ENCODE measurements at regions of chr10 and their contacts with region 1.

Region 1: DNA sequence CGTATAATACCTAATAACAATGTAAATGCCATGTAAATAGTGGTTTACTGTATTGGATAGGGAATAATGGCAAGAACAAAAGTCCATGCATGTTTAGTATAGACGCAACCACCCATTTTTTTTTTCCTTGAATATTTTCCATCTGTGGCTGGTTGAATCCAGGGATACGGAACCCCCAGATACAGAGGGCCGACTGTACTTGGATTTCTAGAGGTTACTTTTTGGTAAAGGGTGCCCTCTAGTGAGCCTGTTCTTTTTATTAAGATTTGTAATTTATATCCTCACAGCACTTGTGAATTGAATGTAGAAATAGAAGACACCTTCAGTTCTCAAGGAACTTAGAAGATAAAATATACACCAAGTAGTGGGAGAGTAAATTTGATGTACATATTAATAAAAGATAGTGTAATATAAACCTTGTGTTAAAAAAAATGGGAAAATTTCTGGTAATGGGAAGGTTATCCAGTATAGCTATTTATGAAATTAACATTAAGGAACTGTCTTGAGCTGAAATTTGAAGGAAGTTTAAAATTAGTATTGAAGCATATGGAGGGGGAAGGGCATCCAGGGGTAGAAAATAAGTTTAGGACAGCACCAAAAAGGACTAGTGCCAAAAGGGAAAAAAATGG is 32.0 kb downstream of the EXOC6 start:
- DNase-seq: peak in 1 of 2 experiments; percentile 59
- H3K4me3 ChIP-seq: no peak overlapping the region
- H3K4me3 Mint-ChIP-seq: no peak overlapping the region
- H3K27ac Mint-ChIP-seq: no peak overlapping the region
- H3K4me1 ChIP-seq: peaks cover 6% of the 10 kb centered on the region; the same call in 1 of the 2 replicates
- H3K4me1 Mint-ChIP-seq: no peaks in the 10 kb centered on the region
- H3K27me3 ChIP-seq: no peaks in the 10 kb centered on the region
- H3K27me3 Mint-ChIP-seq: no peaks in the 10 kb centered on the region
- CTCF ChIP-seq: peak; percentile 54 to 58

Region 2: GRCh38 chr10:92517034-92517655 is 363.2 kb before region 1 on chr10:
- CTCF ChIA-PET with region 1: no interaction called
- POLR2A ChIA-PET with region 1: no interaction called
- intact Hi-C with region 1: loop called (anchors 1 kb)
- DNase-seq: peak; percentile 61 to 67
- H3K4me3 ChIP-seq: no peak overlapping the region
- H3K4me3 Mint-ChIP-seq: no peak overlapping the region
- H3K27ac Mint-ChIP-seq: no peak overlapping the region
- H3K4me1 ChIP-seq: no peaks in the 10 kb centered on the region
- H3K4me1 Mint-ChIP-seq: no peaks in the 10 kb centered on the region
- H3K27me3 ChIP-seq: no peaks in the 10 kb centered on the region
- H3K27me3 Mint-ChIP-seq: no peaks in the 10 kb centered on the region
- CTCF ChIP-seq: peak; percentile 77 to 80

Region 3: GRCh38 chr10:92644921-92645320 is 235.4 kb before region 1 on chr10:
- CTCF ChIA-PET with region 1: no interaction called
- POLR2A ChIA-PET with region 1: no interaction called
- intact Hi-C with region 1: loop called (anchors 2 kb)
- DNase-seq: no peak
- H3K4me3 ChIP-seq: no peak overlapping the region
- H3K4me3 Mint-ChIP-seq: no peak overlapping the region
- H3K27ac Mint-ChIP-seq: no peak overlapping the region
- H3K4me1 ChIP-seq: peaks cover 9% of the 10 kb centered on the region
- H3K4me1 Mint-ChIP-seq: peaks cover 8% of the 10 kb centered on the region
- H3K27me3 ChIP-seq: no peaks in the 10 kb centered on the region
- H3K27me3 Mint-ChIP-seq: no peaks in the 10 kb centered on the region
- CTCF ChIP-seq: no peak

Region 4: GRCh38 chr10:92822060-92822634 is 58.2 kb before region 1 on chr10:
- CTCF ChIA-PET with region 1: no interaction called
- POLR2A ChIA-PET with region 1: no interaction called
- intact Hi-C with region 1: loop called (anchors 5 kb)
- DNase-seq: no peak
- H3K4me3 ChIP-seq: no peak overlapping the region
- H3K4me3 Mint-ChIP-seq: no peak overlapping the region
- H3K27ac Mint-ChIP-seq: peak overlapping the region; percentile 29
- H3K4me1 ChIP-seq: peaks cover 11% of the 10 kb centered on the region; the same call in 1 of the 2 replicates
- H3K4me1 Mint-ChIP-seq: peaks cover 7% of the 10 kb centered on the region
- H3K27me3 ChIP-seq: no peaks in the 10 kb centered on the region
- H3K27me3 Mint-ChIP-seq: peaks cover under 1% of the 10 kb centered on the region
- CTCF ChIP-seq: no peak

Region 5: DNA sequence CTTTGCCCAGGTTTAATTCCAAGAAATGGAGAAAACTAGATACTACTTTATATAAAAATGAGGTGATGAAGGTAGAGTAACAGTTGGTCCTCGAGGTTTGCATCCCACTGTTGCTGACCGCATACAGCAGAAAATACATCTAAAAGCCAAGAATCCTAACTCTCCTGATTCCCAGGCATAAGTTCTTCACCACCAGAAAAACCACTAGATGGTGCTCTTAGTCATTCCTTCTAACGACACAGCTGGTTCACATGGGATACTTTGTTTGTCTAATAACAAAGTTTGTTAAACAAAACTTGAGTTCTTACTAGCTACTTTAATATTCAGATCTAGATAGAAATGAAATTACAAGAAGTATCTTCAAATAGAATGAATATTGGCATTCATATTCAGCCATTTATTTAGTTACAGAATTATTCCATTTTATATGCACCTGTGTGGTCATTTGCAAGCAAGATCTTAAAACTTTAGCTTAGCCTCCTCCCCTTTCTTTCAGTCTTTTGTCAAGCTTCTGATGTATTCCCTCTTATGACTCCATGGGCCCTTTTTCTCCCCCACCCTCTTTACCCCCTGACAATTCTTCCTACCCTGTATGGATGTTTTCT is 126.2 kb after region 1 on chr10:
- CTCF ChIA-PET with region 1: no interaction called
- POLR2A ChIA-PET with region 1: no interaction called
- intact Hi-C with region 1: loop called (anchors 10 kb)
- DNase-seq: peak in 1 of 2 experiments; percentile 53
- H3K4me3 ChIP-seq: no peak overlapping the region
- H3K4me3 Mint-ChIP-seq: no peak overlapping the region
- H3K27ac Mint-ChIP-seq: no peak overlapping the region
- H3K4me1 ChIP-seq: no peaks in the 10 kb centered on the region
- H3K4me1 Mint-ChIP-seq: no peaks in the 10 kb centered on the region
- H3K27me3 ChIP-seq: no peaks in the 10 kb centered on the region
- H3K27me3 Mint-ChIP-seq: no peaks in the 10 kb centered on the region
- CTCF ChIP-seq: peak; percentile 64 to 72

Region 6: GRCh38 chr10:93068411-93069244 is 188.3 kb after region 1 on chr10:
- CTCF ChIA-PET with region 1: no interaction called
- POLR2A ChIA-PET with region 1: no interaction called
- intact Hi-C with region 1: loop called (anchors 2 kb)
- DNase-seq: peak in 1 of 2 experiments; percentile 57
- H3K4me3 ChIP-seq: peak overlapping the region; percentile 30
- H3K4me3 Mint-ChIP-seq: peak overlapping the region; percentile 63
- H3K27ac Mint-ChIP-seq: no peak overlapping the region
- H3K4me1 ChIP-seq: peaks cover 11% of the 10 kb centered on the region
- H3K4me1 Mint-ChIP-seq: no peaks in the 10 kb centered on the region
- H3K27me3 ChIP-seq: peaks cover 5% of the 10 kb centered on the region; the same call in 1 of the 2 replicates
- H3K27me3 Mint-ChIP-seq: peaks cover 14% of the 10 kb centered on the region
- CTCF ChIP-seq: no peak

Measured in Caco-2 (cell line).